GM12878 (cell line): ENCODE measurements at regions of chr7 and their contacts with region 1.

Region 1: GRCh38 chr7:17441557-17441956 is 143.1 kb downstream of the AHR start:
- DNase-seq: no peak
- ATAC-seq: no peak
- H3K4me3 ChIP-seq: no peak overlapping the region
- H3K27ac ChIP-seq: no peak overlapping the region
- H3K4me1 ChIP-seq: no peaks in the 10 kb centered on the region
- H3K27me3 ChIP-seq: no peaks in the 10 kb centered on the region
- CTCF ChIP-seq: no peak
- EP300 ChIP-seq: no peak
- POLR2A ChIP-seq: no peak
- RAD21 ChIP-seq: no peak

Region 2: DNA sequence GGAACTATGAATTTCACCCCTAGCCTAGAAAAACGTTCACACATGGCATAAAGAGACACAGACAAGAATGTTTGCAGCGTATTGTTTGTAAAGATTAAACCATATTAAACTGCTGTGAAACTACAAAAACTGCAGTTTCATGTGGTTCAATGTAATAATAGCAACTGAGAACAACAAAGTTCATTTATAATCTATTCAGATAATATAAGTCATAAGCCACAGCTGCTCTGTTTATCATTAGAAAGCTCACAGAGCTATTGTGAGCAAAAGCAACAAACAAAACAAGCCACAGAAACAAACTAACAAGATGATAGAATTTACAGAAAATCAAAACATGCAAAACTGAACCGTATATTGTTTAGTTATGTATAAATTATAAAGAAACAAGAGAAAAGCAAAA is 29.6 kb before region 1 on chr7:
- CTCF ChIA-PET with region 1: no interaction called
- POLR2A ChIA-PET with region 1: no interaction called
- RAD21 ChIA-PET with region 1: no interaction called
- SMC1A ChIA-PET with region 1: no interaction called
- in situ Hi-C with region 1: no loop called
- intact Hi-C with region 1: no loop called
- DNase-seq: peak; percentile 24
- ATAC-seq: peak; percentile 85
- H3K4me3 ChIP-seq: no peak overlapping the region
- H3K27ac ChIP-seq: no peak overlapping the region
- H3K4me1 ChIP-seq: no peaks in the 10 kb centered on the region
- H3K27me3 ChIP-seq: no peaks in the 10 kb centered on the region
- CTCF ChIP-seq: no peak
- EP300 ChIP-seq: peak; percentile 16 to 66; a peak in 2 of 4 replicates
- POLR2A ChIP-seq: no peak
- RAD21 ChIP-seq: no peak

Region 3: DNA sequence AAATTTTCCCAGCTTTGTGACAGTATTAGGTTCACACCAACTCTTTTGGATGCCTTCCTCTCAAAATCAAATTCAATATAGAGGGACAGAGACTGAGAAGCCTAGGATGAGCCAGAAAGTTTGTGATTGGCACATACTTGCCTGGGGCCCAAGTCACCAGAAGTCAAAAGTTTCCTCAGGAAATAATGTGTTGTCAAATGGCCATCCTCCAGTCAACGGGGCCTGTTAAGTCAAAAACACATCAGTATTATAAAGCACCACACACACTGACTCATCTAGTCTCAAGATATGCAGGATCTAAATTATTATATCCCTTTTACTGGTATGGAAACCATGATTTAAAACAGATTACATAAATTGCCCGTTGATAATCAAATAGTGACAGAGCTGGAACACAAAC is 15.0 kb after region 1 on chr7:
- CTCF ChIA-PET with region 1: no interaction called
- POLR2A ChIA-PET with region 1: no interaction called
- RAD21 ChIA-PET with region 1: no interaction called
- SMC1A ChIA-PET with region 1: interaction called, 11 read pairs
- in situ Hi-C with region 1: no loop called
- intact Hi-C with region 1: no loop called
- DNase-seq: no peak
- ATAC-seq: no peak
- H3K4me3 ChIP-seq: no peak overlapping the region
- H3K27ac ChIP-seq: no peak overlapping the region
- H3K4me1 ChIP-seq: no peaks in the 10 kb centered on the region
- H3K27me3 ChIP-seq: no peaks in the 10 kb centered on the region
- CTCF ChIP-seq: no peak
- EP300 ChIP-seq: no peak
- POLR2A ChIP-seq: no peak
- RAD21 ChIP-seq: no peak